Activated T-helper 2 cell treated with anti-CD3 and anti-CD28 coated beads, Interferon-gamma antibody, Interleukin-2, Interleukin-4, amounts not matched to agents 10 μg/mL and 5 μg/mL and 100 μg/mL, durations not matched to agents 14 hours and 24 hours and 36 hours (primary cell): ENCODE measurements at regions of chr12 and their contacts with region 1.

Region 1: DNA sequence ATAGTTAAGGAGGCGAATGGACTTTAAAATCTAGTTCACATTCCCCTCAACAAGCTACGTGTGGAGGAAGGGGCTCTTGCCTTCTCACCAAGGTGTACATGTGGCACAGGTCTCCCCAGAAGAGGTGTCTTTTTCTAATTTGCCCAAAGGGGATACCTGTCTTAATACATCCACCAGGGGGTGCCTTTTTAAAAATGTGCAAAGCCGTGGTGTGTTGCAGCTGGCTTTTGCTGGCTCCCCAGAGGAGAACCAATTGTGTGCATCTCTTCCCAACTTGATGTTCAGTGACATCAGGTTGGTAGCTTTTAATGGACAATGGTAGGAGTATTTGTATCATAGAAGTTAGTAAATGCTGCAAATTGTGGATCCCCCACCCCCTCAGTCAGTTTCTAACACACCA is 33.8 kb downstream of the CREBL2 start:
- DNase-seq: no peak
- H3K4me3 Mint-ChIP-seq: no peak overlapping the region
- H3K27ac Mint-ChIP-seq: peak overlapping the region; percentile 78
- H3K4me1 Mint-ChIP-seq: peaks cover 13% of the 10 kb centered on the region
- H3K27me3 Mint-ChIP-seq: no peaks in the 10 kb centered on the region

Region 2: DNA sequence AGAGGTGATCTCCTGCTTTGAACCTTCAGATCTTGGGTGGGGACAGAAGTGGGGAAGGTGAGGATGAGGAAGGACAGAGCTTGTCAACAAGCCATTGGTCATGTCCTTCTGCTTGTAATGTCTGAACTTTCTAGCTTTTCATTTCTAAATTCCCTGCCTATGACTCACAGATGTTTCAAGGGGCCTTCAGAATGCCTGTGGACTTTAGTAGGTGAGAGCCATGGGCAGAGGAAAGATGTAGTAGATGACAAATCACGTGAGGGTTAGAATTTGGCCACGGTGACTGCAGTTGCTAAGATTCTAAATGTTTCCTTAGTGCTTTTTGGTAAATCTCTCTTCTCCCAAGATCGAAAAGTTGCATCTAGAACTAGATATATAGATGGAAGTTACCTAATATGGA is 52.6 kb before region 1 on chr12:
- intact Hi-C with region 1: no loop called
- DNase-seq: no peak
- H3K4me3 Mint-ChIP-seq: no peak overlapping the region
- H3K27ac Mint-ChIP-seq: no peak overlapping the region
- H3K4me1 Mint-ChIP-seq: peaks cover 5% of the 10 kb centered on the region
- H3K27me3 Mint-ChIP-seq: peaks cover 2% of the 10 kb centered on the region

Region 3: DNA sequence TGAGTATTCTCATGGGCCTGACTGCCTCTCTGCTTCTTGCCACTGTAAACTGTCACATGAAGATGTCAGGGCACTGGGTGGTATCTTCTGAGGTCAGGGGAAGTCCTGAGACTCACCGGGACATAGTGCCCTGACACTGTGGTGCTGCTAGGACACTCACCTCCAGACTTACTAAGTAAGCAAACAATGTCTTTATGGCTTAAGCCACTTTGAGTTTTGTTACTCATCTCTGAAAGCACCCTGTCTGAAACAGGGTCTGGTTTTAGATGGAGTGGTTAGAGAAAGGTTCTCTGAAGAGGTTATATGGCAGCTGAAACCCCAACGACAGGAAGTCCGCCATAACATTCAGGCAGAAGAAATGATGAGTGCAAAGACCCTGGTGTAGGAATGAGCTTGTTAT is 27.8 kb after region 1 on chr12:
- intact Hi-C with region 1: loop called (anchors 2 kb)
- DNase-seq: no peak
- H3K4me3 Mint-ChIP-seq: no peak overlapping the region
- H3K27ac Mint-ChIP-seq: peak overlapping the region; percentile 56
- H3K4me1 Mint-ChIP-seq: peaks cover 37% of the 10 kb centered on the region
- H3K27me3 Mint-ChIP-seq: no peaks in the 10 kb centered on the region

Region 4: GRCh38 chr12:12696562-12697383 is 51.3 kb after region 1 on chr12:
- intact Hi-C with region 1: loop called (anchors 1 kb)
- DNase-seq: peak; percentile 90
- H3K4me3 Mint-ChIP-seq: peak overlapping the region; percentile 97
- H3K27ac Mint-ChIP-seq: peak overlapping the region; percentile 99
- H3K4me1 Mint-ChIP-seq: peaks cover 58% of the 10 kb centered on the region
- H3K27me3 Mint-ChIP-seq: no peaks in the 10 kb centered on the region